CD8-positive, alpha-beta T cell (primary cell): ENCODE measurements at regions of chr7 and their contacts with region 1.

Region 1: DNA sequence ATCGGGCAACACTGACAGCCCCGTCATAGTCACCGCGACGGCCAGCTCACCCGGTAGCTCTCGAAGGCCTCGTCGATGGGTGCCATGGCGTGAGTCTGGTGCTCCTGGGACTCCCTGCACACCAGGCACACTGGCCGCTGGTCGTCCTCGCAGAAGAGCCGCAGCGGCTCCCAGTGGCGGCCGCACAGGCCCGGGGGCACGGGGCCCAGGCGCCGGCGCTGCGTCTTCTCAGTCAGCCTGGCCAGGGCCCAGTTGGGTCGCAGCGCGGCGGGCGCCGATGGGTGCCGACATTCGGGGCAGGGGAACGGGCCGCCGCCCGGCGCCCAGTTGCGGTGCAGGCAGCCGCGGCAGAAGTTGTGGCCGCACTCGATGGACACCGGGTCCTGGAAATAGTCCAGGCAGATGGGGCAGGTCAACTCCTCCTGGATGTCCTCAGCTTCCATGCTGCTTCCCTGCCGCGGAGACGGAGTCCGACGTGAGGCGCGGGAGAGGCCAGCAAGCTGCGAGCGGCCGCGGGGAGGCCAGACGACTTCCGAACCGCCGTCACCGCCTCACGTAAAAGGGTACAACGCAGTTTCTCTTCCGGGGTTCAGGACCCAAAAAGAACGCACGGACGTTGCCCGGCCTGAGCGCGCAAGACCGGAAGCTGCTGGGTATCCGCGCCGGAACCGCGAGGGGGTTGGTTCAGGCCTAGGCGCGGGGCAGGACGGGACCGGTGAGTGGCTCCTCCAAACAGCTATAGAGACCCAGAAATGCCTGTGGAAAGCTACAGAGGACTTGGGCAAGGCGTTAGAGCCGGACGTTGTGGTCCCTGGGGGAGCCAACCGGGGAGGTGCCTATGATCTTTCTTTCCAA is at the start of gene TRIM4:
- DNase-seq: peak; percentile 74 to 95 (median 89)
- ATAC-seq: peak; percentile 95
- H3K4me3 ChIP-seq: peak within 1 kb of the TSS; percentile 65 to 93
- H3K4me3 Mint-ChIP-seq: peak within 1 kb of the TSS; percentile 92
- H3K27ac ChIP-seq: peak within 1 kb of the TSS; percentile 95 to 97
- H3K27ac Mint-ChIP-seq: peak within 1 kb of the TSS; percentile 98
- H3K4me1 ChIP-seq: peaks cover 43% of the 10 kb centered on the region
- H3K4me1 Mint-ChIP-seq: peaks cover 52% of the 10 kb centered on the region
- H3K27me3 ChIP-seq: no peaks in the 10 kb centered on the region
- H3K27me3 Mint-ChIP-seq: no peaks in the 10 kb centered on the region
- CTCF ChIP-seq: no peak
- total RNA-seq, gene TRIM4: 22.5 to 24.9 TPM

Region 2: GRCh38 chr7:99558306-99559174 is 360.6 kb before region 1 on chr7 and contains the start of gene ZNF655:
- CTCF ChIA-PET with region 1: no interaction called
- POLR2A ChIA-PET with region 1: interaction called, 4 read pairs
- intact Hi-C with region 1: loop called in 1 of 2 experiments (anchors 1 kb)
- DNase-seq: peak; percentile 83 to 97 (median 93)
- ATAC-seq: peak; percentile 81
- H3K4me3 ChIP-seq: peak within 1 kb of the TSS; percentile 72 to 97
- H3K4me3 Mint-ChIP-seq: peak within 1 kb of the TSS; percentile 98
- H3K27ac ChIP-seq: peak within 1 kb of the TSS; percentile 98 to 99
- H3K27ac Mint-ChIP-seq: peak within 1 kb of the TSS; percentile 98
- H3K4me1 ChIP-seq: peaks cover 40% of the 10 kb centered on the region
- H3K4me1 Mint-ChIP-seq: peaks cover 57% of the 10 kb centered on the region
- H3K27me3 ChIP-seq: no peaks in the 10 kb centered on the region
- H3K27me3 Mint-ChIP-seq: no peaks in the 10 kb centered on the region
- CTCF ChIP-seq: no peak
- total RNA-seq, gene ZNF655: 177 to 186 TPM

Region 3: DNA sequence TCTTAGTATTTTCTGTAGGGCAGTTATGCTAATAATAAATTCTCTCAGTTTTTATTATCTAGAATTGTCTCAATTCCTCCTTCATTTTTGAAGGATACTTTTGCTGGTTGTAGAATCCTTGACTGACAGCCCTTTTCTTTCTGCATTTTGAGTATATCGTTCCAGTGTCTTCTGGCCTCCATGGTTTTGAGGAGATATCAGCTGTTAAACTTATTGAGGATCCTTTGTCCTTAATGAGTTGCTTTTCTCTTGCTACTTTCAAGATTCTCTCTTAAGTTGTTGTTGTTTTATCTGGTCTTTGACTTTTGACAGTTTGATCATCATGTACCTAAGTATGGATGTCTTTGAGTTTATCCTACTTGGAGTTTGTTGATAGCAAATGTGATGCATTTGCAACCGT is 19.1 kb after region 1 on chr7:
- CTCF ChIA-PET with region 1: interaction called, 10 read pairs
- POLR2A ChIA-PET with region 1: interaction called, 5 read pairs
- intact Hi-C with region 1: no loop called
- DNase-seq: no peak
- ATAC-seq: no peak
- H3K4me3 ChIP-seq: no peak overlapping the region
- H3K4me3 Mint-ChIP-seq: no peak overlapping the region
- H3K27ac ChIP-seq: no peak overlapping the region
- H3K27ac Mint-ChIP-seq: no peak overlapping the region
- H3K4me1 ChIP-seq: peaks cover 12% of the 10 kb centered on the region
- H3K4me1 Mint-ChIP-seq: peaks cover 11% of the 10 kb centered on the region
- H3K27me3 ChIP-seq: peaks cover 0 to 5% of the 10 kb centered on the region in 2 experiments
- H3K27me3 Mint-ChIP-seq: peaks cover 35% of the 10 kb centered on the region
- CTCF ChIP-seq: no peak

Region 4: DNA sequence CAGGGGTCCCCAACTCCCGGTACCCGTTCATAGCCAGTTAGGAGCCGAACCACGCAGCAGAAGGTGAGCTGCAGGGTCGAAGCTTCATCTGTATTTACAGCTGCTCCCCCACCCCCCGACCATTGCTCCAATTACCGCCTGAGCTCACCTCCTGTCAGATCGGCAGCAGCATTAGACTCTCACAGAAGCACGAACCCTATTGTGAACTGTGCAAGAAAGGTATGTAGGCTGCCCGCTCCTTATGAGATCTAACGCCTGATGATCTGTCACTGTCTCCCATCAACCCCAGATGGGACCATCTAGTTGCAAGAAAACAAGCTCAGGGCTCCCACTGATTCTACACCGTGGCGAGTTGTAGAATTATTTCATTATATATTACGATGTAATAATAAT is 71.3 kb after region 1 on chr7:
- CTCF ChIA-PET with region 1: interaction called, 194 read pairs
- POLR2A ChIA-PET with region 1: interaction called, 3 read pairs
- intact Hi-C with region 1: no loop called
- DNase-seq: no peak
- ATAC-seq: no peak
- H3K4me3 ChIP-seq: no peak overlapping the region
- H3K4me3 Mint-ChIP-seq: no peak overlapping the region
- H3K27ac ChIP-seq: no peak overlapping the region
- H3K27ac Mint-ChIP-seq: no peak overlapping the region
- H3K4me1 ChIP-seq: no peaks in the 10 kb centered on the region
- H3K4me1 Mint-ChIP-seq: peaks cover 3% of the 10 kb centered on the region
- H3K27me3 ChIP-seq: no peaks in the 10 kb centered on the region
- H3K27me3 Mint-ChIP-seq: peaks cover 4% of the 10 kb centered on the region
- CTCF ChIP-seq: no peak

Region 5: GRCh38 chr7:100015232-100016209 is 96.3 kb after region 1 on chr7 and contains the start of gene ZKSCAN1:
- CTCF ChIA-PET with region 1: interaction called, 4 read pairs
- POLR2A ChIA-PET with region 1: interaction called, 9 read pairs
- intact Hi-C with region 1: loop called in 1 of 2 experiments (anchors 1 kb)
- DNase-seq: peak; percentile 67 to 95 (median 83)
- ATAC-seq: peak; percentile 91
- H3K4me3 ChIP-seq: peak within 1 kb of the TSS; percentile 61 to 100
- H3K4me3 Mint-ChIP-seq: peak within 1 kb of the TSS; percentile 95
- H3K27ac ChIP-seq: peak within 1 kb of the TSS; percentile 82 to 97
- H3K27ac Mint-ChIP-seq: peak within 1 kb of the TSS; percentile 98
- H3K4me1 ChIP-seq: peaks cover 22% of the 10 kb centered on the region
- H3K4me1 Mint-ChIP-seq: peaks cover 52% of the 10 kb centered on the region
- H3K27me3 ChIP-seq: no peaks in the 10 kb centered on the region
- H3K27me3 Mint-ChIP-seq: no peaks in the 10 kb centered on the region
- CTCF ChIP-seq: no peak
- total RNA-seq, gene ZKSCAN1: 30.0 to 35.9 TPM

Region 6: GRCh38 chr7:100081535-100082102 is 162.4 kb after region 1 on chr7 and contains the start of gene ZNF3:
- CTCF ChIA-PET with region 1: no interaction called
- POLR2A ChIA-PET with region 1: interaction called, 3 read pairs
- intact Hi-C with region 1: loop called (anchors 1 to 2 kb)
- DNase-seq: peak; percentile 94 to 99 (median 97)
- ATAC-seq: peak; percentile 88
- H3K4me3 ChIP-seq: peak within 1 kb of the TSS; percentile 64 to 65
- H3K4me3 Mint-ChIP-seq: peak within 1 kb of the TSS; percentile 94
- H3K27ac ChIP-seq: peak within 1 kb of the TSS; percentile 58 to 78
- H3K27ac Mint-ChIP-seq: peak within 1 kb of the TSS; percentile 96
- H3K4me1 ChIP-seq: peaks cover 17% of the 10 kb centered on the region
- H3K4me1 Mint-ChIP-seq: peaks cover 38% of the 10 kb centered on the region
- H3K27me3 ChIP-seq: no peaks in the 10 kb centered on the region
- H3K27me3 Mint-ChIP-seq: no peaks in the 10 kb centered on the region
- CTCF ChIP-seq: peak; percentile 98
- total RNA-seq, gene ZNF3: 34.9 to 35.6 TPM

Region 7: GRCh38 chr7:100221231-100221718 is 302.1 kb after region 1 on chr7:
- CTCF ChIA-PET with region 1: no interaction called
- POLR2A ChIA-PET with region 1: no interaction called
- intact Hi-C with region 1: loop called in 1 of 2 experiments (anchors 10 kb)
- DNase-seq: peak; percentile 75 to 95 (median 86)
- ATAC-seq: peak; percentile 67
- H3K4me3 ChIP-seq: peak overlapping the region; percentile 84 to 88
- H3K4me3 Mint-ChIP-seq: peak overlapping the region; percentile 94
- H3K27ac ChIP-seq: peak overlapping the region; percentile 93 to 98
- H3K27ac Mint-ChIP-seq: peak overlapping the region; percentile 99
- H3K4me1 ChIP-seq: peaks cover 52% of the 10 kb centered on the region
- H3K4me1 Mint-ChIP-seq: peaks cover 62% of the 10 kb centered on the region
- H3K27me3 ChIP-seq: no peaks in the 10 kb centered on the region
- H3K27me3 Mint-ChIP-seq: no peaks in the 10 kb centered on the region
- CTCF ChIP-seq: no peak